MCF 10A (cell line): ENCODE measurements at regions of chr12 and their contacts with region 1.

Region 1: GRCh38 chr12:29743801-29744200 is 39.9 kb downstream of the TMTC1 start:
- DNase-seq: peak; percentile 95
- H3K4me3 Mint-ChIP-seq: peak overlapping the region; percentile 62
- H3K27ac Mint-ChIP-seq: peak overlapping the region; percentile 97
- H3K4me1 Mint-ChIP-seq: peaks cover 33% of the 10 kb centered on the region
- H3K27me3 Mint-ChIP-seq: no peaks in the 10 kb centered on the region
- CTCF ChIP-seq: no peak

Region 2: GRCh38 chr12:29691141-29691854 is 52.5 kb before region 1 on chr12:
- CTCF ChIA-PET with region 1: no interaction called
- POLR2A ChIA-PET with region 1: no interaction called
- intact Hi-C with region 1: no loop called
- DNase-seq: no peak
- H3K4me3 Mint-ChIP-seq: no peak overlapping the region
- H3K27ac Mint-ChIP-seq: no peak overlapping the region
- H3K4me1 Mint-ChIP-seq: peaks cover 23% of the 10 kb centered on the region
- H3K27me3 Mint-ChIP-seq: no peaks in the 10 kb centered on the region
- CTCF ChIP-seq: no peak

Region 3: GRCh38 chr12:29711381-29711780 is 32.4 kb before region 1 on chr12:
- CTCF ChIA-PET with region 1: interaction called, 3 read pairs
- POLR2A ChIA-PET with region 1: interaction called, 28 read pairs
- intact Hi-C with region 1: loop called (anchors 1 kb)
- DNase-seq: no peak
- H3K4me3 Mint-ChIP-seq: no peak overlapping the region
- H3K27ac Mint-ChIP-seq: peak overlapping the region; percentile 99
- H3K4me1 Mint-ChIP-seq: peaks cover 62% of the 10 kb centered on the region
- H3K27me3 Mint-ChIP-seq: no peaks in the 10 kb centered on the region
- CTCF ChIP-seq: no peak

Region 4: DNA sequence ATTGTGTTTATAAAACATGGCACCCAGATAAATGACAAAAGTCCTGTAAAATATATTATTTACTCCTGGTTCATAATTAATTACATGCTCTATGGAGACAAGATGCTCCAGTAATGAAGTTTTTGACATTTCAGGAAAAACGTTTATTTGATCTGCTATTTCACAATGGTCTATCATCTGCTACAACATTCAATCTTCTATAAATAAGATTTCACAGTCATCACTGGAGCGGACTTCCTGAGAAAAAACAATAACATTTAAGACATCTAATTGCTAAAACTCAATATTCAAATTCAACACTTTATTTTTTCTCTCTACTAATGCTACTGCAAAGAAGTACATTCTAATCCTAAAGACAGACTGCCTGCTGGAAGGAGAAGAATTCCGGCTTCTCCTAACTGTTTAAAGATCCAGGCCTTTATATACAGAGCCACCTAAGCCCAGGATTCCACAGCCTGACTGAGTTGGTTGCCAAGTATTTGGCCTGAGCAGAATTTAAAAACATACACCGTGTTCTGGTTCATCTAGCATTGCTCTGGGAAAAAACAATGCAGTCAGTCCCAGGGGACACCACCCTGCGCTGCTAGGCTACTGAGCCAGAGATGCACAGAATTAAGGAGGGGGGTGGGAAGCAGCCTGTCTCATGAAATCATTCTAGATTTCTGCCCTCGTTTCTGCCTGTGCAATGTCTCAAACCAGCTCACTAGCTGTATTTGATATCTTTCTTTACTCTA is 18.0 kb before region 1 on chr12:
- CTCF ChIA-PET with region 1: interaction called, 3 read pairs
- POLR2A ChIA-PET with region 1: interaction called, 25 read pairs
- intact Hi-C with region 1: no loop called
- DNase-seq: peak; percentile 79
- H3K4me3 Mint-ChIP-seq: peak overlapping the region; percentile 10
- H3K27ac Mint-ChIP-seq: peak overlapping the region; percentile 91
- H3K4me1 Mint-ChIP-seq: peaks cover 26% of the 10 kb centered on the region
- H3K27me3 Mint-ChIP-seq: no peaks in the 10 kb centered on the region
- CTCF ChIP-seq: no peak

Region 5: GRCh38 chr12:29733060-29733459 is 10.7 kb before region 1 on chr12:
- CTCF ChIA-PET with region 1: interaction called, 3 read pairs
- POLR2A ChIA-PET with region 1: interaction called, 25 read pairs
- intact Hi-C with region 1: no loop called
- DNase-seq: peak; percentile 66
- H3K4me3 Mint-ChIP-seq: no peak overlapping the region
- H3K27ac Mint-ChIP-seq: peak overlapping the region; percentile 72
- H3K4me1 Mint-ChIP-seq: peaks cover 35% of the 10 kb centered on the region
- H3K27me3 Mint-ChIP-seq: no peaks in the 10 kb centered on the region
- CTCF ChIP-seq: no peak

Region 6: DNA sequence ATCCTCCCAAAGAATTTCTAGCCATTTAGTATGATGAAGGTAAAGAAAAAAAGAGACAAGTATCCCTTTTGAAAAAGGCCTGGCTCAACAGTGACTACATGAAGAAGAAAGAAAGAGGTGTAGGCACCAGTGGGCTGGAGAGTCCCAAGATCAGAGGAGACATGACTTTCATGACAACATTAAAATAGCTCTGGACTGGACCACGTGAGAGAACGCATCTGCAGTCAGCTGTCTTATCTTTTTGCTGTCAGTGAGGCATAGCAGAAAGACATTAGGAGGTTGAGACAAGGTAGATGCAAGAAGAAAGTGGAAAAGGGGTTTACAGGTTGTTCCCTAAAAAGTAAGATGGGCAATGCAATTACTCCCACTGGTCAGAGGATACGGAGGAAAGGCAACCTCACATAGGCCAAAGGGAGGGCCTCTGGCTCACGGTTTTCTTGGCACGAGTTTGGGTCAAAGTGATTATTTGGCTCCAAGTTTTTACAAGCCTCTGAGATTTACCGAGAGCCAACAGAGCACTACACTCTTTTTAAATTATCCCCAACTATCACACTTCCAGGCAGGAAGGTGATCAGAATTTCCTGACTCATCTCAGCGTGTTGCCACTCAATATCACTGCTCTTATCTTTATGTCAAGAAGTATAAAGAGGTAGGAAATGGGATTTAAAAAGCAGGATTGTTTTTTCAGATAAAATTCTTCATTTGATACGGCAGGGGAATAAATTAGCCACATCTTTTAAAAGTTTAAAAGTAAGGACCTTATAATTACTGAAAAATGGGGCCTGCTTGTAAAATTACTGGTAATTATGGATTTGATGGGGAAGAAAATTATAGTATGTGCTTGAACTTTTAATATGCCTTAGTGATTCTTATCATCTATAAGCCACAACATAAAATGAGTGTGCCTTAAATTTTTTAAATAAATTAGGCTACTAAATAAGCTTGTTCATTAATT is 10.7 kb after region 1 on chr12:
- CTCF ChIA-PET with region 1: interaction called, 3 read pairs
- POLR2A ChIA-PET with region 1: interaction called, 64 read pairs
- intact Hi-C with region 1: no loop called
- DNase-seq: no peak
- H3K4me3 Mint-ChIP-seq: no peak overlapping the region
- H3K27ac Mint-ChIP-seq: peak overlapping the region; percentile 92
- H3K4me1 Mint-ChIP-seq: peaks cover 38% of the 10 kb centered on the region
- H3K27me3 Mint-ChIP-seq: no peaks in the 10 kb centered on the region
- CTCF ChIP-seq: no peak

Region 7: DNA sequence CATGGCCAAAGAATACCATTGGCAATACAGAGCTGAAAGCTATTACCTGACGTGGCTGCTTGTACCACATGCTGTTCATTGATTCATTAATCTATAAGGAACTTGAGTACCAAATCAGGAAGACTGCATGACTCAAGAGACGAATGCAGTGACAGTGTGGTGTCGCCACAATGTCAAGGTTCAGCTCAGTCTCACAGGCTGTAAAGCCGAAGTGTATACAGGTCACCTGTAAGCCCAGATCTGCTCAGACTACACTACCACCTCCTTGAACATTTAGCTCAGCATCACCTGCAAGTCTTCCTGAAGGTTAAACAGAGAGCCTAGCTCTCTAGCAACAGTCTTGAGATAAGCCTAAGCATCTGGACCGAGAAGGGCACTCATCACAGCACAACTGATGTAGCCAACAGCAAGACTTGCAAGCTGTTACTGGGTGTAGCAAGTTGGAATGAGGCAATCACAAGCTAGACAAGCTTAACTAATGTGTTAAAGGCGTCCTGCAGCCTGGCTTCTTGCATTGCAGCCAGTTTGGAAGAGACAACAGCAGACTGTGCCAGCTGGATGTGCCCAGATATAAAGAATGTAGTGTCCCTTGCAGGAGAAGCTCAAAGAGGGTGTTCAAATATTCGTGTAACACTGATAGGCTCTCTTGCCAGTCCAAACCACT is 19.0 kb after region 1 on chr12:
- CTCF ChIA-PET with region 1: interaction called, 3 read pairs
- POLR2A ChIA-PET with region 1: interaction called, 21 read pairs
- intact Hi-C with region 1: no loop called
- DNase-seq: peak; percentile 27
- H3K4me3 Mint-ChIP-seq: no peak overlapping the region
- H3K27ac Mint-ChIP-seq: no peak overlapping the region
- H3K4me1 Mint-ChIP-seq: peaks cover 7% of the 10 kb centered on the region
- H3K27me3 Mint-ChIP-seq: no peaks in the 10 kb centered on the region
- CTCF ChIP-seq: no peak

Region 8: GRCh38 chr12:29796823-29797263 is 53.0 kb after region 1 on chr12:
- CTCF ChIA-PET with region 1: interaction called, 3 read pairs
- POLR2A ChIA-PET with region 1: interaction called, 11 read pairs
- intact Hi-C with region 1: no loop called
- DNase-seq: peak; percentile 89
- H3K4me3 Mint-ChIP-seq: peak overlapping the region; percentile 15
- H3K27ac Mint-ChIP-seq: peak overlapping the region; percentile 88
- H3K4me1 Mint-ChIP-seq: peaks cover 20% of the 10 kb centered on the region
- H3K27me3 Mint-ChIP-seq: no peaks in the 10 kb centered on the region
- CTCF ChIP-seq: no peak